ENCODE measurements at regions of chr5 and their contacts with region 1.

Region 1: DNA sequence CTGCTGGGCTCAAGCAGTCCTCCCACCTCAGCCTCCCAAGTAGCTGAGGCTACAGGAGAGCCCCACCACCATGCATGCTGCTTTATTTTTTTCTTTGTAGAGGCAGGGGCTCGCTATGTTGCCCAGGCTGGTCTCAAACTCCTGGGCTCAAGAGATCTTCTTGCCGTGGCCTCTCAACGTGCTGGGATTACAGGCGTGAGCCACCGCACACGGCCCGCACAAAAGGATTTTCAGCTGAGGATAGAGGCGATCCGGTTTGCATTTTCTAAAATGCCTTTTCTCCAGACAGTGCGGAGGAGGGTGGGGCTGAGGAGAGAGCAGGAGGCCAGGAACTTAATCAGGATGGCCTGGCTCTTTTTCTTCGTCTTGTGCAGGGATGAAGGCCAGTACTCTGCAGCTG is 6.9 kb downstream of the HRH2 start:
- DNase-seq: no peak
- H3K4me3 ChIP-seq: no peak overlapping the region
- H3K27ac ChIP-seq: no peak overlapping the region
- H3K4me1 ChIP-seq: no peaks in the 10 kb centered on the region
- H3K27me3 ChIP-seq: no peaks in the 10 kb centered on the region
- CTCF ChIP-seq: no peak

Region 2: DNA sequence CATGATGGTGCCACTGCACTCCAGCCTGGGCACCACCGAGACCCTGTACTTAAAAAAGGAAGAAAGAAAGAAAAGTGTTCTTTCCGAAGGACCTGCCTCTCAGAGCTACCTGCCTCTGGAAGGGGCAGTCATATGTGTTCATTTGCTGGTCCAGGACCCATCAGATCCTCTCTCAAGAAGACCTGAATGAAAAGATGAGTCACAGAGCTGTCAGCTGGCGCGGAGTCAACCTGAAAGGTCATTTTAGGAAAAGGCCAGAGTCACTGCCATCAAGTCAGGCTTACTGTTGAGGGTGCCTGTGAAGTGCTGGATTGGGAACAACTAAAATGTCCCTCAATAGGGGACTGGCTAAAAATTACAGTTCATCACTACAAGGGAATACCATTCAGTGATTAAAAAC is 21.7 kb before region 1 on chr5:
- CTCF ChIA-PET with region 1: no interaction called
- dilution Hi-C with region 1: no loop called
- in situ Hi-C with region 1: no loop called
- intact Hi-C with region 1: loop called (anchors 1 kb)
- DNase-seq: no peak
- H3K4me3 ChIP-seq: no peak overlapping the region
- H3K27ac ChIP-seq: no peak overlapping the region
- H3K4me1 ChIP-seq: no peaks in the 10 kb centered on the region
- H3K27me3 ChIP-seq: no peaks in the 10 kb centered on the region
- CTCF ChIP-seq: no peak

Measured in mammary epithelial cell (primary cell).